ENCODE measurements at regions of chr3 and their contacts with region 1.

Region 1: DNA sequence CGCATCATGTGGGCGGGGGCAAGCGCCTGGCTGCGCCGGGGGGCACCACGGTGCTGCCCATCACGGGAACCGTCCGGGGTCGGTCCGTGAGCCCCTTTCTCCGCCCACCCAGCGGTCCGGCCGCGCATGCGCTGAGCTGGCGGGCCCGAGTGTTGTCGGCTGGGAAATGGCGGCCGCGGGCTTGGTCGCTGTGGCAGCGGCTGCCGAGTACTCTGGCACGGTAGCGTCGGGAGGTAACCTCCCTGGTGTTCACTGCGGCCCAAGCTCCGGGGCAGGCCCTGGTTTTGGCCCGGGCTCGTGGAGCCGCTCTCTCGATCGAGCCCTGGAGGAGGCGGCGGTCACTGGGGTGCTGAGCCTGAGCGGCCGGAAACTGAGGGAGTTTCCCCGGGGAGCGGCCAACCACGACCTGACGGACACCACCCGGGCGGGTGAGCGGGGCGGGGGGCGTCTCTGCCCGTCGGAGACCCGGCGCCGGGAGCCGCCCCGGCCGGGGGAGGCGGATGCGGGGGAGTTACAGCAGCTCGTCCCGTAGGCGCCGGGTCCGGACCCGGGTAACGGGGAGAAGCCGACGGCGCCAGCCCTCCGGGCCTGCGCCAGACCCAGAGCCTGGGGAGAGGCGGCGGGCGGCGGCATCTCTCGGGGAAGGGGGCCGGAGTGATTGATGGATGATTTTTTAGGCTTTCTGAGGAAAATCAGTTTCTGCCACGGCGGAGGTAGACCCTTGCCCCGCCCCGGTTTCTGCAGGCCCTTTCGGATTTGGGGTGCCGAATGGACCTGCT is at the start of gene LRCH3:
- DNase-seq: no peak
- H3K4me3 ChIP-seq: peak within 1 kb of the TSS; percentile 90
- CTCF ChIP-seq: no peak

Region 2: DNA sequence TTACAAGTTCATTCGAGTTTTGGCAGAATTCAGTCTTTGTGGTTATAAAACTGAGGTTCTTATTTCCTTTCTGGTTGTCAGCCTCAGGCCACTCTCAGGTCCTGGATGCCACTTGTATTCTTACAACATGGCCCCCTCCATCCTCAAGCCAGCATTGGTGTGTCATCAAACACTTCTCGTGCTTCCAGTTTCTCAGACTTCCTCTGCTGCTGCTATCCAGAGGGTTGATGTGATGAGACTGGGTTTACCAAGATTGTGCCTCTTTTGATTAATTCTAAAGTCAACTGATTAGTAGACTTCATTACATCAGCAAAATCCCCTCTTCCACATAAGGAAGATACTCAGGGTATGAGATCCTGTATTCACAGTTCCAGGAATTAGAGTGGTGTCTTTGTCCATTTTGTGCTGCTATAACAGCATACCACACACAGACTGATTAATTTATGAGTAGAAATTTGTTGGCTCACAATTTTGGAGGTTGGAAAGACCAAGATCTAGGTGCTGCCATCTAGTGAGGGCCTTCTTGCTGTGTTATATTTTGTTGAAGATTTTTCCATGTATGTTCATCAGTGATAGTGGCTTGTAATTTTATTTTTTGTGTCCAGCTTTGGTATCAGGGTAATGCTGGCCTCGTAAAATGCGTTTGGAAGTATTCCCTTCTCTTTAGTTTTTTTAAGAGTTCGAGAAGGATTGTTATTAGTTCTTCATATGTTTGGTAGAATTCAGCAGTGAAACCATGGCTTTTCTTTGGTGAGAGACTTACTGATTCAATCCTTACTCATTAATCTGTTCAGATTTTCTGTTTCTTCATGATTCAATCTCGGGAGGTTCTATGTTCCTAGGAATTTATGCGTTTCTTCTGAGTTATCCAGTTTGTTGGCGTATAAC is 10.8 kb after region 1 on chr3:
- CTCF ChIA-PET with region 1: interaction called, 13 read pairs
- POLR2A ChIA-PET with region 1: no interaction called
- DNase-seq: no peak
- H3K4me3 ChIP-seq: no peak overlapping the region
- CTCF ChIP-seq: peak; percentile 13

Region 3: GRCh38 chr3:197809356-197810020 is 18.2 kb after region 1 on chr3:
- CTCF ChIA-PET with region 1: no interaction called
- POLR2A ChIA-PET with region 1: interaction called, 10 read pairs
- DNase-seq: peak; percentile 65
- H3K4me3 ChIP-seq: peak overlapping the region; percentile 4; the same call in 1 of the 2 replicates
- CTCF ChIP-seq: no peak

Region 4: GRCh38 chr3:197912770-197913476 is 121.6 kb after region 1 on chr3:
- CTCF ChIA-PET with region 1: no interaction called
- POLR2A ChIA-PET with region 1: no interaction called
- DNase-seq: no peak
- H3K4me3 ChIP-seq: no peak overlapping the region
- CTCF ChIP-seq: no peak

Measured in AG04449 (cell line).